ENCODE measurements at regions of chr5 and their contacts with region 1.

Region 1: DNA sequence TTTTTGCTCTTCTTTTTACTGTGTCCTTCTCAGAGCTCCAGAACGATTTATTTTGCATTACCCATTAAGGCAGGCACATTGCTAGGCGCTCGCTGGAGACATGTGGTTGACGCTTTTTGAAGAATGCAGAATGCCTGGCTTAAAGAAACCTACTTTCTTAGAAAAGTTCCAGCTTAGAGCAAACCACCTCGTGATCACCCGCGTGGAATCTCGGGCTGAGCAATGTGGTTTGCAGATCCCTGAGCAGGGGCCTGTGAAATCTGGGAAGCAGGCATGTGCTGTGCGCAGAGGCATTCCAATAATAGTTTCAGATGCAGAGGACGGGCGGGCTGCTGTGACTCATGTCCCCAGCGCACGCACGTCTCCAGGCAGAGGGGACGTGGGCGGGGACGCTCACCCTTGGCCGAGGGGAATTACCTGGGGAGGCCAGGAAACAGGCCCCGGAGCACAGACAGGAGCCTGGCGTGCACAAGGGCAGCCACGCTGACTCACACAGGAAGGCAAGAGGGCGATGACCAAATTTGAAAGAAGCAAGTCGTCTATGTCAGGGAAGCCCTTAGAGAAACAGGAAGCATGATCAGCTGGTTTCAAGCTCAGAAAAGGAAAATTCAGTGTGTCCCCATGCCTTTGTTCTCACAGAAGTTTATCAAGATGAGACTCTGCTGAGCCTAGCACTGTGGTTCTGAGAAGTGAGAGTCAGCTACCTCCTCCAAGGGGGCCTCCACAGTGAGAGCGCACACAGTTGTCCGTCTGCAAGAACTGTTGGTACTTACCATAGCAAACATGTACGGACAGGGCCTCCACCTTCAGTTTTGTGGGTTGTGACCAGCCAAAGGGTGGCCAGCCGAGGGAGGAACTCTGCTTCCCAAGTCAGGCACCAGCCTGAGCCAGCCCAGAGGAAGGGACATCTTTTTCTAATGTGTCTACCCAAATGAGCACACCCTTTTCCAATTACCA is 218.6 kb downstream of the PIK3R1 start:
- DNase-seq: peak; percentile 98
- H3K4me3 Mint-ChIP-seq: peak overlapping the region; percentile 42
- H3K27ac Mint-ChIP-seq: peak overlapping the region; percentile 77
- H3K4me1 Mint-ChIP-seq: peaks cover 53% of the 10 kb centered on the region
- H3K27me3 Mint-ChIP-seq: peaks cover 2% of the 10 kb centered on the region

Region 2: GRCh38 chr5:68272289-68272688 is 161.9 kb before region 1 on chr5:
- CTCF ChIA-PET with region 1: no interaction called
- POLR2A ChIA-PET with region 1: no interaction called
- intact Hi-C with region 1: loop called (anchors 1 kb)
- DNase-seq: no peak
- H3K4me3 Mint-ChIP-seq: no peak overlapping the region
- H3K27ac Mint-ChIP-seq: no peak overlapping the region
- H3K4me1 Mint-ChIP-seq: peaks cover 89% of the 10 kb centered on the region
- H3K27me3 Mint-ChIP-seq: no peaks in the 10 kb centered on the region

Region 3: DNA sequence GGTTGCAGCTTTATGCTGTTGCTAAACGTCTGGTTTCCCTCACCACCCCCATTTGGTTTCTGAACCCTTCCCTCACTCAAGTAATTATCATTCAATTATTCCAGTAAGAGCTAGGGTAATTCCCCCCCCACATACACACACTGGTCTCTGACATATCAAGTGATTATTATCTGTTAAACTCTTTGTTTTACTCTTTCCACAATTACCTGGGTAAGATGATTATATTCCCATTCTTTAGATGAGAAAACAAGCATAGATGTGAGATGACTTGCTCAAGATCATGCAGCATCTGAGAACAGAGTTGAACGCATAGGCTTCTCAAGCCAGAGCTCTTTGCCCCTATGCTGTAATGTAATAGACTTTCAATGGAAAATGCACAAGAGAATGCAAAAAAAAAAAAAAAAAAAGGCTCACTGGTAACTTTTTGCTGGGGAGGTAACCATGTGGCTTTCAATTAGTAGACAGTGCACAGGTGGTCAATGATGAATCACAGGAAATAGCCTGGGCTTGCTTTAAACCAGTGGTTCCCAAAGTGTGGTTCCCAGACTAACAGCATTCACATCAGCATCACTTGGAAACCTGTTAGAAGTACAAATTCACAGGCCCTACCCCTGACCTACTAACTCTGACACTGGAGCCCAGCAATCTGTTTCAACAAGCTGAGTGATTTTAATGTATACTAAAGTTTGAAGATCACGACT is 131.0 kb before region 1 on chr5:
- CTCF ChIA-PET with region 1: interaction called, 3 read pairs
- POLR2A ChIA-PET with region 1: interaction called, 5 read pairs
- intact Hi-C with region 1: loop called (anchors 1 kb)
- DNase-seq: no peak
- H3K4me3 Mint-ChIP-seq: no peak overlapping the region
- H3K27ac Mint-ChIP-seq: peak overlapping the region; percentile 57
- H3K4me1 Mint-ChIP-seq: peaks cover 49% of the 10 kb centered on the region
- H3K27me3 Mint-ChIP-seq: no peaks in the 10 kb centered on the region

Region 4: DNA sequence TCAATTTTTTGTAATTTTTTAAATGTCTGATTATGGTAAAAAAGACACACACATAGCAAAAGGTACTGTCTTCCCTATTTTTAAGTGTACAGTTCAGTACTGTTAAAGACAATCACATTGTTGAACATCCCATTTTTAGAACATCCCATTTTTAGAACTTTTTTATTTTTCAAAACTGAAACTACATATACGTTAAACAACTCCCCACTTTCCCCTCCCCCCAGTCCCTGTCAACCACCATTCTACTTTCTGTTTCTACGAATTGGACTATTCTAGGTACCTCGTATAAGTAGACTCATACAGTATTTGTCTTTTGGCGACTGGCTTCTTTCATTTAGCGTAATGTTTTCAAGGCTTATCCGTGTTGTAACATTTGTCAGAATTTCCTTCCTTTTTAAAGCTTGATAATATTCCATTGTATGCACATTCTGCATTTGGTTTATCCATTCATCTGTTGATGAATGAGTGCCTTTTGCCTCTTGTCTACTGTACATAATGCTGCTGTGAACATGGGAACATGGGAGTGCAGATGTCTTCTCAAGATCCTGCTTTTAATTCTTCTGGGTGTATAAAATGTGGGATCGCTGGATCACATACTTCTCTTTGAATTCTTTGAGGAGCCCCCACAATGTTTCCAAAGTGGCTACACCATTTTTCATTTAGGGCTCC is 64.6 kb before region 1 on chr5:
- CTCF ChIA-PET with region 1: no interaction called
- POLR2A ChIA-PET with region 1: no interaction called
- intact Hi-C with region 1: loop called (anchors 2 kb)
- DNase-seq: peak; percentile 69
- H3K4me3 Mint-ChIP-seq: peak overlapping the region; percentile 13
- H3K27ac Mint-ChIP-seq: peak overlapping the region; percentile 36
- H3K4me1 Mint-ChIP-seq: peaks cover 35% of the 10 kb centered on the region
- H3K27me3 Mint-ChIP-seq: no peaks in the 10 kb centered on the region

Region 5: DNA sequence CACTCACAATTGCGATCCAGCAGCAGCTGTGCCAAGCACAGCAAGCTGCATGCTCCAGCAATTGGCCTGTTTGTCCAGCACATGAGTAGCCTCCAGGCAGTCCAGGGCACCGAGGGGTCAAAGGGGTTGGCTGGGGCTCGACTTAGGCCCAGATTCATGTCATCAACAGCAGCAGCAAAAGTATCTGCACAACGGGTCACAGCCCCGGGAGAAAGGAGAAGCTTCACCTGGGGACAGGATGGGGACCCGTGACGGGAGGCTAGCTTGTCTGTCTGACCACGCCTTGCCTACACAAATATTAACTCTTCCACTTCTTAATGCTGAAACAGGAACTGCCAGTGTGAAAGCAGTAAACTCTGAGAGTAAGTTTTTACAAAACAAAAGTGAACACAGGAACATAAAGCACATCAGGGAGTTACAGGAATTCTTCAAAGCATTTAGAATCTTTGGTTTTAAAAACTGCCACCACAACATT is 27.4 kb before region 1 on chr5:
- CTCF ChIA-PET with region 1: no interaction called
- POLR2A ChIA-PET with region 1: no interaction called
- intact Hi-C with region 1: loop called (anchors 1 kb)
- DNase-seq: no peak
- H3K4me3 Mint-ChIP-seq: no peak overlapping the region
- H3K27ac Mint-ChIP-seq: no peak overlapping the region
- H3K4me1 Mint-ChIP-seq: peaks cover 23% of the 10 kb centered on the region
- H3K27me3 Mint-ChIP-seq: no peaks in the 10 kb centered on the region

Region 6: GRCh38 chr5:68534131-68534940 is 100.1 kb after region 1 on chr5:
- CTCF ChIA-PET with region 1: no interaction called
- POLR2A ChIA-PET with region 1: no interaction called
- intact Hi-C with region 1: no loop called
- DNase-seq: no peak
- H3K4me3 Mint-ChIP-seq: no peak overlapping the region
- H3K27ac Mint-ChIP-seq: no peak overlapping the region
- H3K4me1 Mint-ChIP-seq: no peaks in the 10 kb centered on the region
- H3K27me3 Mint-ChIP-seq: peaks cover 18% of the 10 kb centered on the region